WTC11 (cell line): ENCODE measurements at regions of chr19 and their contacts with region 1.

Region 1: GRCh38 chr19:12484371-12485051 is at the start of gene ZNF709:
- DNase-seq: peak; percentile 97
- ATAC-seq: peak; percentile 98
- H3K4me3 Mint-ChIP-seq: peak within 1 kb of the TSS; percentile 89
- H3K27ac Mint-ChIP-seq: no peak within 1 kb of the TSS; the same call in 1 of the 2 replicates
- H3K4me1 Mint-ChIP-seq: peaks cover 16% of the 10 kb centered on the region
- H3K27me3 Mint-ChIP-seq: peaks cover 14% of the 10 kb centered on the region
- CTCF ChIP-seq: no peak
- total RNA-seq, gene ZNF709: 3.0 to 3.8 TPM (median 3.4 TPM) in 3 replicates

Region 2: DNA sequence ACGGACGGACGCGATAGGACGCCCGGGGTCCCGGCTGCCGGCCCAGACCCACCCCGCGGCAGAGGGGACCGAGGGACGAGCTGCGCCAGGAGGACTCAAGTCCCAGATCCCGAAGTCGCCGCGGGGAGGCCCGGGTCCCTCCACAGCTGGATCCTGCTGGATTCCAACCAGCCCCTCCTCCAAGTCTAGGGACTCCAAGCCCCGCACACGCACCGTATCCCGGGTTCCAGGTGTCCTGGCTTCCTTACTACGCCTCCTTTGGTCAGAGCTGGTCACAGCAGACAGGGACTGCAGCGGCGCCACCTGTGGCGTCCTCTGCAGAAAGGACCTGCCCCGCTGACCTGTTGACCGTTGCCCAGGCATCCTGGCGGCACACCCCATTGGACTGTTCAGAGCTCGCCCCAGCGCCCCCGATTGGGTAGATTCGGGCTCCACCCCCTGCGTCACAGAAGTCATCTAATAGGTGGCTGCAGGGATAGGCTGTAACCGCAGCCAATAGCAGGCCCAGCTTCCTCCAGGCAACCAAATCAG is 29.1 kb after region 1 on chr19:
- CTCF ChIA-PET with region 1: interaction called, 12 read pairs
- POLR2A ChIA-PET with region 1: interaction called, 4 read pairs
- DNase-seq: peak; percentile 75
- ATAC-seq: peak; percentile 89
- H3K4me3 Mint-ChIP-seq: peak overlapping the region; percentile 47
- H3K27ac Mint-ChIP-seq: no peak overlapping the region
- H3K4me1 Mint-ChIP-seq: no peaks in the 10 kb centered on the region
- H3K27me3 Mint-ChIP-seq: no peaks in the 10 kb centered on the region
- CTCF ChIP-seq: no peak; the same call in 1 of the 2 replicates